Breast epithelium (tissue), 4 donors: ENCODE measurements at regions of chr9 and their contacts with region 1.

Region 1: GRCh38 chr9:14322211-14323082 is 8.5 kb upstream of the NFIB start:
- DNase-seq: peak; percentile 86 to 90
- H3K4me3 ChIP-seq: peak overlapping the region; percentile 84 to 88 (median 86)
- H3K27ac ChIP-seq: peak overlapping the region; percentile 99
- H3K4me1 ChIP-seq: no peaks in the 10 kb centered on the region
- H3K27me3 ChIP-seq: no peaks in the 10 kb centered on the region
- CTCF ChIP-seq: peak; percentile 45 to 57 (median 53)
- POLR2A ChIP-seq: peak; percentile 19

Region 2: DNA sequence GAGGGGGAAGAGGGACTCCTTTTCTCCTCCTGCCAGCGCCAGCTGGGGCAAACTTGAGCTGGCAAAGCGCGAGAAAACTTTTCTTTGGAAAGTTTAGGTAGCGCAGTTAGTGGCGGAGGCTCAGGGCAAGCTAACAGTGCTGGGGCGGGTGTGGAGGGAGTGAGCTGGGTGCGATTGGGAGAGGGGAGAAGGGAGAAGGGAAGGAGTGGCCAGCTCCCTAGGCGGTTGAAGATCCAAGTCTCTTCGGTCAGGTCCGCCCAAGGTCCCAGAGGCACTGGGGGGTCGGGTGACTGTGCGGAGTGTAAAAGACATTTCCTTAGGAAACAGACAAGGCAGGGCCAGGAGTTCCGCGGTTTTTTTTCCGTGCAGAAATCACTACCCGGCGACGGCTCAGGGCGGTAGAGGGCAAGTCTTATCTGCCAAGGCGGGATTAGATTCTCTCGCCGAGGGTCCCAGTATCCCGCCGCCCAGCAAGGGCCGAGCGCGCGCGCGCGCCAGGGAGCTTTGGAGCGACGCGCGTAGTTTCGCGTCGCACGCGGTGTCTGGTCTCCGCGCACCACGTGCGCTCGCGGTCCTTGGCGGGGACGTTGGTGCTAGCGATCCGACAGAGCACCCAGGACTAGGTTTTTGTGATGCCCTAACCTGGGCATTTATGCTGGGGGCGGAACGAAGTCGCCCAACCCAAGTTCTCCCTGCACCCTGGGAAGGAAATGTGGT is 25.1 kb after region 1 on chr9:
- intact Hi-C with region 1: loop called (anchors 1 kb)
- DNase-seq: peak in 1 of 2 donors; percentile 76
- H3K4me3 ChIP-seq: peak overlapping the region; percentile 55 to 70 (median 55)
- H3K27ac ChIP-seq: peak overlapping the region; percentile 92 to 95
- H3K4me1 ChIP-seq: no peaks in the 10 kb centered on the region
- H3K27me3 ChIP-seq: peaks cover 0 to 34% of the 10 kb centered on the region in 2 donors
- CTCF ChIP-seq: no peak
- POLR2A ChIP-seq: peak; percentile 21

Region 3: GRCh38 chr9:14674630-14675029 is 352.2 kb after region 1 on chr9:
- intact Hi-C with region 1: no loop called
- DNase-seq: no peak
- H3K4me3 ChIP-seq: no peak overlapping the region
- H3K27ac ChIP-seq: no peak overlapping the region
- H3K4me1 ChIP-seq: no peaks in the 10 kb centered on the region
- H3K27me3 ChIP-seq: no peaks in the 10 kb centered on the region
- CTCF ChIP-seq: no peak
- POLR2A ChIP-seq: no peak

Region 4: GRCh38 chr9:15101095-15101494 is 778.6 kb after region 1 on chr9:
- intact Hi-C with region 1: no loop called
- DNase-seq: no peak
- H3K4me3 ChIP-seq: no peak overlapping the region
- H3K27ac ChIP-seq: no peak overlapping the region
- H3K4me1 ChIP-seq: no peaks in the 10 kb centered on the region
- H3K27me3 ChIP-seq: no peaks in the 10 kb centered on the region
- CTCF ChIP-seq: no peak
- POLR2A ChIP-seq: no peak